ENCODE measurements at regions of chr12 and their contacts with region 1.

Region 1: DNA sequence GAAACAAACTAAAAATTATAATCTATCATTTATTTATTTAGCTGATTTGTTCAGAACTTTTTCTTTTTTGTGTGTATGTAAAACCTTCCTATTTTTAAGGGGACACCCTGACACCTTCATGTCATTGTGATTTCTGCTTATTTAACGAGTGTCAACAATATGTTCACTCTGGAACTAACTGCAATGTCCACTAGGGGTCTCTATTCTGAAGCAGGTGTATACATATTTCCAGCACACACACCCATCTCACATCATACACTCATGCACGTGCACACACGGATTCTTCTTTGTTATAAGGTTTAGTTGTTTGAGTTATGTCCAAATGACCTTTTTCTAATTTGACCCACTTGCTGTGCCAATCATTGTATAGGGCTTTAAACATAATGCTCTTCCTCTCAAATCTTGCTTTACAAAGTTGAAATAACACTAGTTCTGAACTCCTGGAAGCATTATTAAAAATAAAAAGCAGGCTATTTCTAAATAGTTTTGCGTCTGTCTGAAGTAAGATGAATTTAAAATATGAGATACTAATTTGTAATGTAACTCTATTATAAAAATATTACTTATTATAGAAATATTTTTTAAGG is 15.5 kb downstream of the E2F7 start:
- DNase-seq: peak; percentile 50 to 78
- ATAC-seq: peak; percentile 95 to 97
- H3K4me3 ChIP-seq: no peak overlapping the region
- H3K27ac ChIP-seq: no peak overlapping the region
- H3K4me1 ChIP-seq: no peaks in the 10 kb centered on the region
- CTCF ChIP-seq: peak; percentile 90
- EP300 ChIP-seq: no peak
- POLR2A ChIP-seq: no peak
- RAD21 ChIP-seq: peak; percentile 68 to 70

Region 2: GRCh38 chr12:76680940-76681339 is 368.9 kb before region 1 on chr12:
- CTCF ChIA-PET with region 1: no interaction called
- POLR2A ChIA-PET with region 1: no interaction called
- DNase-seq: no peak
- ATAC-seq: no peak
- H3K4me3 ChIP-seq: no peak overlapping the region
- H3K27ac ChIP-seq: no peak overlapping the region
- H3K4me1 ChIP-seq: 0 out of 3 replicates have a peak, but pooled peaks cover 5% of the 10 kb centered on the region
- CTCF ChIP-seq: no peak
- EP300 ChIP-seq: no peak
- POLR2A ChIP-seq: no peak
- RAD21 ChIP-seq: no peak

Region 3: DNA sequence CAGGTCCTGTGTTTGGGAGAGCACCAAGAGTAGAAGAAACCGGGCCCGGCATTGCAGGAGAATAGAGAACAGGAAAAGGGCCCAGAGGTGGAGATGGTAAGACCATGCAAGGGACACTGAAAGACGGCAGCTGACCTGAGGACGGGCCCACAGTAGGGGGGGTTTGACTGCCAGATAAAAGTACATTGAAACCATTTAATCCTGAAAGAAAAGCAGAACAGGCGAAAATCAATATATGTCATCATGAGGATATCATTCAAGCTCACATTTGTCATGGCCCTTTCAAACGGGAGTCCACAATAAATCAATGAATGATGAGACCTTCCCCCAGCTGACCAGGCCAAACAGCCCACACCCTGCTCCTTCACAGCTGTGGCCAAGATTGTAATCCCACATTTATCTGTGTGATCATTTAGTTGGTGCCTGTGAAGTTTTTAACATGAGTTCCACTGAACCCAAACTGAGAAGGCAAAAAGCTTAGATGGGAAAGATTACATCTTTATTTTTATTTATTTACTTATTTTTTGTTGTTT is 24.0 kb before region 1 on chr12:
- CTCF ChIA-PET with region 1: interaction called, 14 read pairs
- POLR2A ChIA-PET with region 1: no interaction called
- DNase-seq: no peak
- ATAC-seq: no peak
- H3K4me3 ChIP-seq: no peak overlapping the region
- H3K27ac ChIP-seq: no peak overlapping the region
- H3K4me1 ChIP-seq: no peaks in the 10 kb centered on the region
- CTCF ChIP-seq: no peak
- EP300 ChIP-seq: no peak
- POLR2A ChIP-seq: no peak
- RAD21 ChIP-seq: no peak

Region 4: DNA sequence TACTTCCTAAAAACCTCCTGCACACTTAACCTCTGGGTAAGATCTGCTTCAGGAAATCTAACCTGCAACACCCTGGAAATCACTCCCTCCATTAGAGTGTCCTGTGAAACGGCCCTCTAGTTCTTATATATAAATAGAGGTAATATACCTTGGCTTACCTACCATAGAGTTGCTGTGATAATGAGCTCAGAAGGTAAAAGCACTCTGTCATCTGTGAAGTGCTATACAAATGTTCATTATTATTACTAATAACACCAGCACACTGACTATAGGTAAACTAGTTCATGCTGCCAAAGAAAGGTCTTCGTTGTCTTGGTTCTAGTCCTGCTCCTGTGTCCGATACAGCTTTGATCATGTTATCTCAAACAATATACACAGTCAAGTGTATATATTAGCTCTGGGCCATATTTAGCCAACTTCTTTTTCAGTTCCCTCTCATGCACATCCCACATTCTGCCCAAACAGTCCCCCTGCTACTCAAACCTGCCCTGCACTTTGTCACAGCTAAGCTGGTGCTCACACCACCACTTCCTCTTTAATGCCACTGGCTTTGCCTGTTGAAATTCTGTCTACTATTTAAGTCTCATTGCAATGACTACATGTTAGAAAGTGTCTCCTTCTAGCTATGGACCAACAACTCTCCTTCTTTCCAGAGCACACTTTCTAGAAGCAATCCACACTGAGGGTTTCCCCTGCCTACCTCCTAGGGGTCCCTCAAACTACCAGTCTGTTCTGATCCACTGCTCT is 10.4 kb after region 1 on chr12:
- CTCF ChIA-PET with region 1: interaction called, 36 read pairs
- POLR2A ChIA-PET with region 1: no interaction called
- DNase-seq: no peak
- ATAC-seq: no peak
- H3K4me3 ChIP-seq: no peak overlapping the region
- H3K27ac ChIP-seq: no peak overlapping the region
- H3K4me1 ChIP-seq: peaks cover 8% of the 10 kb centered on the region; the same call in 1 of the 3 replicates
- CTCF ChIP-seq: no peak
- EP300 ChIP-seq: no peak
- POLR2A ChIP-seq: no peak
- RAD21 ChIP-seq: no peak